MCF 10A (cell line): ENCODE measurements at regions of chr14 and their contacts with region 1.

Region 1: DNA sequence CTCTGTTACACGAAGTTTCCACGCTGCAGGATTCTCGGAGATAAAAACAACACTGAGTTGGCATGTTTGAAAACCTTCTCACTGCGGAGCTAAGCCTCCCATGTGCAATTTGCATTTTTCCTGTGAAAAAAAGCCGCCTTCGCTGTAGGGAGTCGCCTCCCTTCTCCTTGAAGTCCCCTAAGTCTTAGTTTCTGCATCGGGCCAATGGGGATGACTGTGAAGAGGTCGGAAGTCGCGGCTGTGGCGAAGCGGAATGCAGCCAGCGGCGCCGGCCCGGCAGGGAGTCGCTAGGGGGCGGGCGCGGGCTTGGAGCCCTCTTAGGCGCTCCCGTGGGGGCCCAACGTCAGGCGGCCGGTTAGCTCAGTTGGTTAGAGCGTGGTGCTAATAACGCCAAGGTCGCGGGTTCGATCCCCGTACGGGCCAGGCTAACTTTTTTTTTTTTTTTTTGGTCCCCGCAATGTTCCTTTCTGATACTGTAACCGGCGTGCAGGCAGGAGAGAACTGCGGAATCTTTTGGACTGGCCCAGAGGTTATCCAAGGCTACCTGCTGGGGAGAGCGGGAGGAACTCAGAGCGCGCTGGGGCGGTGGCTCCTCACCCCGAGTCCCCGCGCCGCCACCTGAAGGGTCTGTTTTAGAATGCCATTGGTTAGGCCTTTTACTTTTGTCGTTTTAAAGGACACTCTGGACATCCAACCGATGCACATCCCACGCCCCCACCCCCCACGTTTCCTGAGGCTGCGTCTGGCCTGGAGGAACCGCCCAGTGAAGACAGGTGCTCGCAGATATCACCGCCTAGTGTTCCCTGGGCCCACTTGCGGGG is 2.6 kb upstream of the ZNF839 start:
- DNase-seq: peak; percentile 90
- H3K4me3 Mint-ChIP-seq: peak overlapping the region; percentile 93
- H3K27ac Mint-ChIP-seq: peak overlapping the region; percentile 69
- H3K4me1 Mint-ChIP-seq: peaks cover 16% of the 10 kb centered on the region
- H3K27me3 Mint-ChIP-seq: no peaks in the 10 kb centered on the region
- CTCF ChIP-seq: peak; percentile 91

Region 2: GRCh38 chr14:102063091-102063802 is 253.7 kb before region 1 on chr14:
- CTCF ChIA-PET with region 1: interaction called, 5 read pairs
- POLR2A ChIA-PET with region 1: interaction called, 4 read pairs
- intact Hi-C with region 1: loop called (anchors 1 kb)
- DNase-seq: peak; percentile 88
- H3K4me3 Mint-ChIP-seq: no peak overlapping the region
- H3K27ac Mint-ChIP-seq: no peak overlapping the region
- H3K4me1 Mint-ChIP-seq: no peaks in the 10 kb centered on the region
- H3K27me3 Mint-ChIP-seq: no peaks in the 10 kb centered on the region
- CTCF ChIP-seq: peak; percentile 29

Region 3: DNA sequence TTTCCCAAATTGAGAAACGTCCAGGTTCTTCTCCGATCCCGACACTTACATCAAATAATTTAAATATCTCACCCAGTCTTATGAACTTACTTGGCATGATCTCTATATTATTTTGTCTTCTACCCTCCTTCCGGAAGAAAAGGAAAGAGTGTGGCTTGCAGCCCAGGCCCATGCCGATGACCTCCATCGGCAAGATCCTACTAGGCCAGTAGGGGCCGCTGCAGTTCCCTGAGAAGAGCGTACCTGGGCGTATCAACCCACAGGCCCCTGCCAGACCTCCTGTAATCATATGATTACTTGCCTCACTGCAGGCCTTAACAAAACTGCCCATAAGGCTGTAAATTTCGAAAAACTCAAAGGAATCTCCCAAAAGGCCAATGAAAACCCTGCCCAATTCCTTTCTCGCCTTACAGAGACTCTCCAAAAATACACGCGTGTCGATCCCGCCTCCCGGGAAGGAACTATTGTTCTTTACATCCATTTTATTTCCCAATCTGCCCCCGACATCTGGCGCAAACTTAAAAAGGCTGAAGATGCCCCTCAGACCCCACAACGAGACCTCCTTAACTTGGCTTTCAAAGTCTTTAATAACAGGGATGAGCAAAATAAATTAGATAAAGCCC is 81.6 kb before region 1 on chr14:
- CTCF ChIA-PET with region 1: interaction called, 20 read pairs
- POLR2A ChIA-PET with region 1: interaction called, 6 read pairs
- intact Hi-C with region 1: loop called (anchors 1 kb)
- DNase-seq: peak; percentile 91
- H3K4me3 Mint-ChIP-seq: no peak overlapping the region
- H3K27ac Mint-ChIP-seq: no peak overlapping the region
- H3K4me1 Mint-ChIP-seq: no peaks in the 10 kb centered on the region
- H3K27me3 Mint-ChIP-seq: no peaks in the 10 kb centered on the region
- CTCF ChIP-seq: peak; percentile 66

Region 4: GRCh38 chr14:102362545-102363181 is 45.7 kb after region 1 on chr14 and contains the starts of genes CINP and TECPR2:
- CTCF ChIA-PET with region 1: interaction called, 3 read pairs
- POLR2A ChIA-PET with region 1: interaction called, 15 read pairs
- intact Hi-C with region 1: no loop called
- DNase-seq: peak; percentile 92
- H3K4me3 Mint-ChIP-seq: no peak within 1 kb of the TSS
- H3K27ac Mint-ChIP-seq: peak within 1 kb of the TSS; percentile 93
- H3K4me1 Mint-ChIP-seq: peaks cover 16% of the 10 kb centered on the region
- H3K27me3 Mint-ChIP-seq: no peaks in the 10 kb centered on the region
- CTCF ChIP-seq: no peak
- total RNA-seq, gene CINP: 36.6 and 51.1 TPM in 2 replicates
- total RNA-seq, gene TECPR2: 18.2 and 18.4 TPM in 2 replicates

Region 5: DNA sequence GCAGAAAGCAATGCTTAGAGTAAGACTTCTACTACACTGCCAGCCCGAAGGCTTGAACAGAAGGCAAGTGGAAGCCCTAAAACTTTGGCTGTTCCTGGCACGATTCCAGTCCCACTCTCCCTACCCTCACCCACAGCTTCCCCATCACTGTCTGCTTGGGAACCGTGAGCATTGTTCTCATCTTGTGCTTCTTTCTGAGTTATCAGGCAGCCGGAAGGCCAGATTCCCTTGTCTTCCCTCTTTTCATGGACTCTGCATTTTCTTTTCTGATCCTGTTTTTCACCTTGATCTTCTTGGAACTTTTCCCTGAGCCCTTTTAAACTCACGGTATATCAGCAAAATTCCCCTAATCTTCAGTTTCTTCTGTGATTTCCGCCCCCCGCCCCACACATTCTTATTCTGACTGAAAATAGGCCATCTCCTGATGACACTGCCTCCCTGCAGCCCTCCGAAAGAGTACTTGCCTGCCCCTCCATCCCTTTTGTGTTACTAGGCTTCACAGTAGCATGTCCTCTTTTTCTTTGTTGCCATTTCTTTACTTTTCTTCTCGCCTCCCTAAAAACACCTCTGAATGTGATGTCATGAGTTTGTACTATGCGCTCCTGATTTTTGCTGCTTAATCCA is 305.4 kb after region 1 on chr14:
- CTCF ChIA-PET with region 1: no interaction called
- POLR2A ChIA-PET with region 1: no interaction called
- intact Hi-C with region 1: no loop called
- DNase-seq: no peak
- H3K4me3 Mint-ChIP-seq: no peak overlapping the region
- H3K27ac Mint-ChIP-seq: peak overlapping the region; percentile 10
- H3K4me1 Mint-ChIP-seq: peaks cover 33% of the 10 kb centered on the region
- H3K27me3 Mint-ChIP-seq: no peaks in the 10 kb centered on the region
- CTCF ChIP-seq: no peak